Activated CD8-positive, alpha-beta T cell treated with anti-CD3 and anti-CD28 coated beads for 36 hours (primary cell): ENCODE measurements at regions of chr10 and their contacts with region 1.

Region 1: GRCh38 chr10:7260412-7260900 is 150.4 kb downstream of the SFMBT2 start:
- DNase-seq: peak; percentile 31
- ATAC-seq: peak; percentile 17
- H3K4me3 Mint-ChIP-seq: no peak overlapping the region
- H3K27ac Mint-ChIP-seq: peak overlapping the region; percentile 46
- H3K4me1 Mint-ChIP-seq: peaks cover 58% of the 10 kb centered on the region
- H3K27me3 Mint-ChIP-seq: no peaks in the 10 kb centered on the region
- CTCF ChIP-seq: peak; percentile 67

Region 2: DNA sequence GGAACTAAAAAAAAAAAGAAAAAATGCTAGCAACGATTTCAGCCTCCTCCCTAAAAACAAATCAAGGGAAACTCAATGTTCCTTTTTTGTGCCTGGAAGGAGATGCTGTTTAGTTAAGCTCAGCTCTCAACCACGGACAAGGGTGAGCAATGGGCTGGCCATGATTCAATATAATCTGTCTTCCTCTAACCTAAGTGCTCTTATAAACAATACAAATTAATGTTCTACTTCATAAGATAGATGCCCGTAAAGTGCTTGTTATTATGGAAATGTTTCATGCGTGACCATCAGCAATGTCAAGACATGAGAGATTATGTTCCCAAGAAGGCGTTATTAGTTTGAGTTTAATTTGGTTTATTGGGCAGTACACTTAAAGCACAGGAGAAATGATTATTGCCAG is 169.9 kb before region 1 on chr10:
- CTCF ChIA-PET with region 1: no interaction called
- POLR2A ChIA-PET with region 1: no interaction called
- intact Hi-C with region 1: no loop called
- DNase-seq: no peak
- ATAC-seq: no peak
- H3K4me3 Mint-ChIP-seq: no peak overlapping the region
- H3K27ac Mint-ChIP-seq: no peak overlapping the region
- H3K4me1 Mint-ChIP-seq: no peaks in the 10 kb centered on the region
- H3K27me3 Mint-ChIP-seq: no peaks in the 10 kb centered on the region
- CTCF ChIP-seq: no peak

Region 3: GRCh38 chr10:7184660-7185366 is 75.6 kb before region 1 on chr10:
- CTCF ChIA-PET with region 1: interaction called, 3 read pairs
- POLR2A ChIA-PET with region 1: no interaction called
- intact Hi-C with region 1: loop called (anchors 5 kb)
- DNase-seq: no peak
- ATAC-seq: peak; percentile 21
- H3K4me3 Mint-ChIP-seq: no peak overlapping the region
- H3K27ac Mint-ChIP-seq: peak overlapping the region; percentile 78
- H3K4me1 Mint-ChIP-seq: peaks cover 68% of the 10 kb centered on the region
- H3K27me3 Mint-ChIP-seq: no peaks in the 10 kb centered on the region
- CTCF ChIP-seq: no peak

Region 4: DNA sequence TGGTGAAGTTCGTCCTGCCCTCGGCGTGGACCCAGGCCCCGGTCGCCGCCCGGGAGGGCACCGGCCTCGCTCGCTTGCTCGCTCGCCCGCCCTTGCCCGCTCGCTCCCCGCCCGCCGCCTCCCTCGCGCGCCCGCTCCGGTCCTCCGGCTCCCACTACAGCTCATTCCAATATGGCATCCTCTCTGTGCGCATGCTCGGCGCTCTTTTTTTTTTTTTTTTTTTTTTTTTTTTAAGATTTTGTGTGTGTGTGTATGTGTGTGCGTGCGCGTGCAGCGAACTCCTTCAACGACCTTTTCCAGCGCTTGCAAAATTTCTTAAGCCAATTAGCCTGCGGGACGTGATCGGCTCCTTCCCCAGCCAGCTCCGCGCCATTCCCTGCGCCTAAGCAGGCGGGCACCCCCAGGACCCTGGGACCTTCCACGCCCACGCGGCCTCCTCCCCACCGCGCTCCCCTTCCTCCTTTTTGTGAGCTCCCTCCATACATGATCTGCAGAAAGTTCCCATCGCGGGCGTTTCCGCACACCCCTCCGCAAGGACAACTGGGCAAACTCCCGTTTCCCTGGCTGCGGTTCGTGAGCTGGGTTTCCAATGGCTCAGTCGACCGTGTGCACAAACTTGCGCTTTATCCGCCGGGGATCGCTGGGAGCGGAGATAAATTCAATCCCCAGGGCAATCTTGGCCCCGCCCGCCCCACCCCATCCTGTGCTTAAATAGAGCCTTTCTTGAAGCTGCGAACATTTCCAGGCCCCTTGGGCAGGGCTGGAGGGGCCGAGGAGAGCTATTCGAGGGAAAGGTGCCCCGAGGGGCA is 150.6 kb after region 1 on chr10 and contains the start of gene SFMBT2:
- CTCF ChIA-PET with region 1: interaction called, 27 read pairs
- POLR2A ChIA-PET with region 1: interaction called, 5 read pairs
- intact Hi-C with region 1: loop called (anchors 5 kb)
- DNase-seq: peak; percentile 71
- ATAC-seq: peak; percentile 45
- H3K4me3 Mint-ChIP-seq: peak within 1 kb of the TSS; percentile 95
- H3K27ac Mint-ChIP-seq: peak within 1 kb of the TSS; percentile 97
- H3K4me1 Mint-ChIP-seq: peaks cover 41% of the 10 kb centered on the region
- H3K27me3 Mint-ChIP-seq: peaks cover 13% of the 10 kb centered on the region
- CTCF ChIP-seq: no peak
- total RNA-seq, gene SFMBT2: 23.8 to 27.6 TPM

Region 5: GRCh38 chr10:7857262-7857661 is 596.8 kb after region 1 on chr10:
- CTCF ChIA-PET with region 1: no interaction called
- POLR2A ChIA-PET with region 1: no interaction called
- intact Hi-C with region 1: no loop called
- DNase-seq: no peak
- ATAC-seq: no peak
- H3K4me3 Mint-ChIP-seq: no peak overlapping the region
- H3K27ac Mint-ChIP-seq: no peak overlapping the region
- H3K4me1 Mint-ChIP-seq: peaks cover 9% of the 10 kb centered on the region
- H3K27me3 Mint-ChIP-seq: no peaks in the 10 kb centered on the region
- CTCF ChIP-seq: no peak